Gastrocnemius medialis (tissue), 4 donors: ENCODE measurements at regions of chr4 and their contacts with region 1.

Region 1: DNA sequence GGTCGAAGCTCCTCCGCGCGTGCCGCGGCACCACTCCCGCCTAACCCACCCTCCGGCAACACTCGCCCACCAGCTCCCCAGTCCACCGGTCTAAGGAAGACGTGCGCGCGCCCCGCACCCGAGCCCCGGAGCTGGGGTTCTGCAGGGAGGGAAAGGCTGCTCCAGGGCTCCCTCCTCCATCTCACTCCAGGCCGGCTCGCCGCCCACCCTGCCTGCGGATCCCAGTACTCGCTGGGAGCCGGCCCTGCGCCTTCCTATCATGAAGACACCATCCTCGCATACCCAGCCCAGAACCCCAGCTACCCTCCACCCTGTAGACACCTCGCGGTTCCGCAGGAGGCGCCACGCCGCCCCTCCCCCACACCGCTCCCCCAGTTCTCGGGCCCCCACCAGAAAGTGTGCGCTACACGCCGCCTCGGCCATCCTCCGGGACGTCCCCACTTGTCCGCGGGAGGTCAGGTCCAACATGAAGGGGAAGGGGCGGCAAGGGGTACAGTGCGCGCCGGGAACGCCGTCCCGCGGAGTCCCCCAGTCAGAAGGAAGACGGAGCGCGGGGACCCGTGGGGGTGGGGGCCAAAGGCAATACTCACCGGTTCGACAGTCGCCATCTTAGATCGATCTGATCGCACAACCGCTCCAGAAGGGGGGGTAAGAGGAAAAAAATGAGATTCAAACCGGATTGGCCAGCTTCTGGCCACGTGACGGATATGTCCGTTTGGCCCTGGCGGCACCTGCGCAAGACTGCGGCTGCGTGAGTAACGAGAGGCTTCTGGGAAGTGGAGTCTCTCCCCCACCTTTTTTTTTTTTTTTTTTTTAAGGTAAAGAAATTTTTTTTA is at the start of gene EIF4E:
- DNase-seq: peak; percentile 97 to 99
- ATAC-seq: peak; percentile 85 to 87
- H3K4me3 ChIP-seq: peak within 1 kb of the TSS; percentile 86 to 99 (median 93)
- H3K27ac ChIP-seq: peak within 1 kb of the TSS; percentile 98 to 100 (median 98)
- H3K4me1 ChIP-seq: peaks cover 19 to 32% of the 10 kb centered on the region in 2 donors
- H3K27me3 ChIP-seq: no peaks in the 10 kb centered on the region
- CTCF ChIP-seq: peak in 2 of 5 experiments; percentile 7 to 30
- POLR2A ChIP-seq: peak; percentile 70 to 74
- total RNA-seq, gene EIF4E: 35.7 to 67.5 (median 56.0) TPM

Region 2: GRCh38 chr4:98260579-98261290 is 668.0 kb before region 1 on chr4:
- in situ Hi-C with region 1: loop called in 1 of 4 experiments (anchors 25 kb)
- intact Hi-C with region 1: loop called (anchors 5 kb)
- DNase-seq: peak; percentile 93 to 94
- ATAC-seq: peak; percentile 86
- H3K4me3 ChIP-seq: peak overlapping the region; percentile 89 to 98 (median 90)
- H3K27ac ChIP-seq: peak overlapping the region; percentile 96 to 99 (median 98)
- H3K4me1 ChIP-seq: peaks cover 19% of the 10 kb centered on the region in 2 donors
- H3K27me3 ChIP-seq: no peaks in the 10 kb centered on the region
- CTCF ChIP-seq: no peak
- POLR2A ChIP-seq: peak; percentile 80 to 94

Region 3: GRCh38 chr4:98995183-98996055 is 66.7 kb after region 1 on chr4 and contains the start of gene METAP1:
- in situ Hi-C with region 1: loop called in 1 of 4 experiments (anchors 10 kb)
- intact Hi-C with region 1: loop called (anchors 1 kb)
- DNase-seq: peak; percentile 93 to 96
- ATAC-seq: peak; percentile 88 to 90
- H3K4me3 ChIP-seq: peak within 1 kb of the TSS; percentile 76 to 100 (median 93)
- H3K27ac ChIP-seq: peak within 1 kb of the TSS; percentile 87 to 97 (median 96)
- H3K4me1 ChIP-seq: peaks cover 13 to 16% of the 10 kb centered on the region in 2 donors
- H3K27me3 ChIP-seq: no peaks in the 10 kb centered on the region
- CTCF ChIP-seq: peak; percentile 55 to 69 (median 56)
- POLR2A ChIP-seq: peak; percentile 70 to 75
- total RNA-seq, gene METAP1: 33.3 to 45.0 (median 37.9) TPM

Region 4: DNA sequence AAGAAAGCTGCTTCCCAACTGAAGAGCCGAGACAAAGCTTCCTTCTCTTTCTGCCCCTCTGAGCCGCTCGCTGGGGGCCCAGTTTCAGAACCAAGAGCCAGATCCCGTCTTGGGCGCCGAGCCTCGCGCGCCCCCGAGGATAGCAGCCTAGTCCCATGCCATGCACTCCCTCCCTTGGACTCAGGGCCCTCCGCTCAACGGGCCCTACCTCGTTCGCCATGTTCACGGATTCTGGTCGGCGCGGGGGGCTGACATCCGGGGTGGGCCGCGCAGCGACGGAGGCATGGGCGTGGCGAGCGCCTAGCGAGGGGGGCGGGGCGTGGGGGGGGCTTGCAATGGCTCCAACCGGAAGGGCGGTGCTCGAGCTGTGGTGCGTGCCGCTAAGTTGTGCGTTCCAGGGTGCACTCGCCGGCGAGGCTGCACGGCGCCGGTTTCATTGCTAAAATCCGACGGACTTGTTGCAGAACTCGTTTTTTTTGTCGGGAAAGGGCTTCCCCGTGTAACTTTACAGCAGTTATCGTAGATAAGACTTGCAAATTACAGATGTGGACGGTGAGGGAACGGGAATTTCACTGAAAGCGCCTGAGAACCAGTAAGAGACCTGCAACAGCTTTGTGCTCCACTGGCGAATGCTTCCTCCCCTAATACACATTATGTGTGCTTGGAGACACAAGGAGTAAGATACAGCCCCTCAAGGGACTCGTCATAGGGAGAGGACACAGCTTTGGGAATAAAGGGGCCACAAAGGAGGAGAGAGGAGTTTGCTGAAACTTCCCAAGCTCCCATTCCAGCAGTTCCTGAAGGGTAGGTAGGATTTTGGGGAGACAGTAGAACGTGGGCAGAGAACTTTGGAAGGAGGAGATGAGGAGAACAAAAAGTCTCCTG is 160.0 kb after region 1 on chr4 and contains the start of gene ADH5:
- in situ Hi-C with region 1: no loop called
- intact Hi-C with region 1: loop called (anchors 5 kb)
- DNase-seq: peak; percentile 79 to 87
- ATAC-seq: peak; percentile 84 to 85
- H3K4me3 ChIP-seq: peak within 1 kb of the TSS; percentile 70 to 92 (median 73)
- H3K27ac ChIP-seq: peak within 1 kb of the TSS; percentile 87 to 97 (median 93)
- H3K4me1 ChIP-seq: peaks cover 0 to 23% of the 10 kb centered on the region in 2 donors
- H3K27me3 ChIP-seq: no peaks in the 10 kb centered on the region
- CTCF ChIP-seq: no peak
- POLR2A ChIP-seq: peak; percentile 86 to 87
- total RNA-seq, gene ADH5: 55.2 to 101 (median 72.6) TPM

Region 5: DNA sequence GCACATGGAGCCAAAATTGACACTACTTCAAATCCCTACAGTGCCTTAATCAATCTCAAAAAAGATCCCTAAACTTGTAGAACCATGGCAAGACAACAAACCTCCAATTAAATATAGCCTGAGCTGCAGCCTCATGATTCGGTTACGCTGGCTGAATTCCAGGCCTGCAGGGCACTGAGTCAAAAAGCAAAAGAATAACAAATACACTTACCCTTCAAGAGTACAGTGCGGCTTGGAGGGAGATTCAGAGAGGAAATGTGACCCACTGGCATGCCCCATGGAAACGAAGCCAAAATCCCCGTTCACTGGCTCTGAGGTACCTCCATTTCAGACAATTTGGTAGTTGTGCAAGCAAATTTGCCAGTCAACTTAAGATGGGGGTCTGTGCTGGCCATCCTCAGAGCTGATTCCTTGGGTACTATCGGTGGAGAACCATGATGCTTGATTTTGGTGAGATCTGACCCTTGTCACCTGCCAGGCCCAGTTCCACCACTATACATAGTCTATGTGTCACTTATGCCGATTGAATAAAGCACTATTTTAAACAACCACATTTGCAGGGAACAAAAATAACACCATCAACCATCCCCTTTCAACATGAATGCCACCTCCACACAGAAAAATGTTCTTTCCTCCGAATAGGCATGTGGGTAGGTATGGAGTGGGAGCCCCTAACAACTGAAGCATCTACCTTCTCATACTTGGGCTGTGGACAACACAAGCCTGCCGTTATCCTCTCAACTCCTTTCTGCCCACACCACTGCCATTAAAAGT is 726.8 kb after region 1 on chr4:
- in situ Hi-C with region 1: no loop called
- intact Hi-C with region 1: loop called (anchors 10 kb)
- DNase-seq: peak; percentile 78 to 80
- ATAC-seq: peak; percentile 14 to 50
- H3K4me3 ChIP-seq: peak overlapping the region; percentile 62 to 75 (median 62)
- H3K27ac ChIP-seq: peak overlapping the region; percentile 94 to 99 (median 98)
- H3K4me1 ChIP-seq: peaks cover 47 to 55% of the 10 kb centered on the region in 2 donors
- H3K27me3 ChIP-seq: no peaks in the 10 kb centered on the region
- CTCF ChIP-seq: no peak
- POLR2A ChIP-seq: peak in 1 of 2 donors; percentile 30